ENCODE measurements at regions of chr17 and their contacts with region 1.

Region 1: DNA sequence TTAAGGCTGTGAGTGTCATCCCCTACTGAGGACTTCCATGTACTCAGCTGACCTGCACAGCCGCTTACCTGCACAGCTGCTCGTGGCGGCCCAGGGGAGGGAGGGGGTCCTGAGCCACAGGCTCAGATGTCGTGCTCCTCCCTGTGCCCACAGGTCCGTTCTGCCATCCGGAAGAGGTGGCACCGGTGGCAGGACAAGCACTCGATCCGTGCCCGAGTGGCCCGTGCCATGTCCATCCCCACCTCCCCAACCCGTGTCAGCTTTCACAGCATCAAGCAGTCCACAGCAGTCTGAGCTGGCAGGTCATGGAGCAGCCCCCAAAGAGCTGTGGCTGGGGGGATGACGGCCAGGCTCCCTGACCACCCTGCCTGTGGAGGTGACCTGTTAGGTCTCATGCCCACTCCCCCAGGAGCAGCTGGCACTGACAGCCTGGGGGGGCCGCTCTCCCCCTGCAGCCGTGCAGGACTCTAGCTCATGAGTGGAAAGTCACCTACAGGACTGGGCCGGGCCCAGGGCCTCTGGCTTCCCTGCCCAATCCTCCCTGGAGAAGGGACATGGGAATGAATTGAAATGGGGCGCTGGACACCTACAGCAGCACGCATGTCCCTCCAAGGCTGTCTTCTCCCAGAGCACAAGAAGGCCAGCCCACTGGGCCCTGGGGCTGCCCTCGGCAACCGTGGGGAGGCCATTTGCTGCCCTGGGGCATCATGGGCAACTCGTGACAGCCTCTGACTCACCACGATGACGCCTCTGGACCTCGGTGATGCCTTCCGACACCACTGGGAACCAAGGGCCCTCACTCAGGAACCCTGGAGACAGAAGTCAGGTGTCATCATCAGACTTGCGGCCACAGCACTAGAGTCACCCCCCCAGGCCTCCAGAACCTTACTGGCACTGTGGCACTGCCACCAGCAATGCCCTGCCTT is 9.9 kb upstream of the SPPL2C start:
- DNase-seq: no peak
- H3K4me3 ChIP-seq: no peak overlapping the region
- H3K27ac ChIP-seq: no peak overlapping the region
- H3K4me1 ChIP-seq: no peaks in the 10 kb centered on the region
- H3K27me3 ChIP-seq: peaks cover 94% of the 10 kb centered on the region
- CTCF ChIP-seq: no peak

Region 2: GRCh38 chr17:45394913-45395568 is 439.7 kb before region 1 on chr17:
- intact Hi-C with region 1: loop called (anchors 10 kb)
- DNase-seq: peak; percentile 54
- H3K4me3 ChIP-seq: peak overlapping the region; percentile 39
- H3K27ac ChIP-seq: no peak overlapping the region
- H3K4me1 ChIP-seq: peaks cover 26% of the 10 kb centered on the region
- H3K27me3 ChIP-seq: no peaks in the 10 kb centered on the region
- CTCF ChIP-seq: peak; percentile 79

Region 3: DNA sequence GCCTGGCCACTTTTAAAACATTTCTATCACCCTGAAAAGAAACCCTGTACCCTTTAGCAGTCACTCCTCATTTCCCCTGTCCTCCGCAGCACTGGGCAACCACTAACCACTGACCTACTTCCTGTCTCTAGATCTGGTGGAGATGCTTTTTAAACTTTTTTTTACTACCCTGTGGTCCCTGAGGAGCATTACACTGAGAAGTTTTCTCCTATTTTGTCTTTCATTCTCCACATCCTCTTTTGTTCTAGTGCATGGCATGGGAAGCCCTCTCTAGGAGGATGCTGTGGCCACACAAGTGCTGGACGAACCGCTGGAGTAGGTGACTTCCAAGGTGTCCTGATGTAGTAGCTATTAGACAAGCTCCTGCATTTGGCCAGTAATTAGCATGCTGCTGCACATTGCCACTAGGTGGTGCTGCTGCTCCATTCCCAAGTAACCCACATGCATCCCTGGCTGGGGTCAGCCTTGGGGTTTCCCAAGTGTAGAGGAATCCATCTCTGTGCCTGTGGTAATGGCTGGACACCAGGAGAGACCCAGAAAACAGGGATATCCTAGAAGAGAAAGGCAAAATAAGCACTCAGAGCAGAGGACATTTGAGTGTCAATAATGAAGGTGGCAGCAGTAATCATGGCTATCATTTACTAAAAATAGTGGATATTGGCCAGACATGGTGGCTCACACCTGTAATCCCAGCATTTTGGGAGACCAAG is 194.4 kb before region 1 on chr17:
- intact Hi-C with region 1: loop called (anchors 5 kb)
- DNase-seq: peak; percentile 48
- H3K4me3 ChIP-seq: no peak overlapping the region
- H3K27ac ChIP-seq: no peak overlapping the region
- H3K4me1 ChIP-seq: no peaks in the 10 kb centered on the region
- H3K27me3 ChIP-seq: no peaks in the 10 kb centered on the region
- CTCF ChIP-seq: peak; percentile 98

Measured in left ventricle myocardium inferior (tissue), 1 donor.